CD8-positive, alpha-beta memory T cell (primary cell): ENCODE measurements at regions of chr1 and their contacts with region 1.

Region 1: GRCh38 chr1:52636721-52637695 is 4.0 kb downstream of the SHISAL2A start:
- DNase-seq: peak; percentile 57 to 90 (median 87)
- H3K4me3 ChIP-seq: peak overlapping the region; percentile 13
- H3K4me3 Mint-ChIP-seq: peak overlapping the region; percentile 78 to 91 (median 84)
- H3K27ac ChIP-seq: peak overlapping the region; percentile 81
- H3K27ac Mint-ChIP-seq: peak overlapping the region; percentile 98 to 100 (median 100)
- H3K4me1 ChIP-seq: peaks cover 89% of the 10 kb centered on the region
- H3K4me1 Mint-ChIP-seq: peaks cover 78 to 84% (median 81%) of the 10 kb centered on the region in 3 donors
- H3K27me3 ChIP-seq: no peaks in the 10 kb centered on the region
- H3K27me3 Mint-ChIP-seq: no peaks in the 10 kb centered on the region

Region 2: GRCh38 chr1:52552505-52553361 is 84.3 kb before region 1 on chr1 and contains the start of gene TUT4:
- CTCF ChIA-PET with region 1: interaction called, 3 read pairs
- POLR2A ChIA-PET with region 1: interaction called, 18 read pairs
- DNase-seq: peak in 4 of 5 donors; percentile 64 to 83 (median 65)
- H3K4me3 ChIP-seq: peak within 1 kb of the TSS; percentile 91
- H3K4me3 Mint-ChIP-seq: peak within 1 kb of the TSS in 5 of 7 donors; percentile 70 to 78 (median 75)
- H3K27ac ChIP-seq: peak within 1 kb of the TSS; percentile 79
- H3K27ac Mint-ChIP-seq: peak within 1 kb of the TSS in 7 of 8 donors; percentile 30 to 86 (median 81)
- H3K4me1 ChIP-seq: peaks cover 37% of the 10 kb centered on the region
- H3K4me1 Mint-ChIP-seq: peaks cover 30 to 45% (median 42%) of the 10 kb centered on the region in 3 donors
- H3K27me3 ChIP-seq: no peaks in the 10 kb centered on the region
- H3K27me3 Mint-ChIP-seq: no peaks in the 10 kb centered on the region
- total RNA-seq, gene TUT4: 54.1 to 63.1 TPM

Region 3: GRCh38 chr1:52582116-52582696 is 54.8 kb before region 1 on chr1:
- CTCF ChIA-PET with region 1: no interaction called
- POLR2A ChIA-PET with region 1: interaction called, 10 read pairs
- DNase-seq: no peak
- H3K4me3 ChIP-seq: no peak overlapping the region
- H3K4me3 Mint-ChIP-seq: no peak overlapping the region
- H3K27ac ChIP-seq: no peak overlapping the region
- H3K27ac Mint-ChIP-seq: peak overlapping the region in 1 of 8 donors; percentile 8
- H3K4me1 ChIP-seq: no peaks in the 10 kb centered on the region
- H3K4me1 Mint-ChIP-seq: peaks cover 5 to 10% (median 9%) of the 10 kb centered on the region in 3 donors
- H3K27me3 ChIP-seq: no peaks in the 10 kb centered on the region
- H3K27me3 Mint-ChIP-seq: no peaks in the 10 kb centered on the region

Region 4: GRCh38 chr1:52686830-52687229 is 49.8 kb after region 1 on chr1:
- CTCF ChIA-PET with region 1: interaction called, 14 read pairs
- POLR2A ChIA-PET with region 1: no interaction called
- DNase-seq: no peak
- H3K4me3 ChIP-seq: no peak overlapping the region
- H3K4me3 Mint-ChIP-seq: no peak overlapping the region
- H3K27ac ChIP-seq: no peak overlapping the region
- H3K27ac Mint-ChIP-seq: peak overlapping the region in 2 of 8 donors; percentile 49 to 76
- H3K4me1 ChIP-seq: peaks cover 8% of the 10 kb centered on the region
- H3K4me1 Mint-ChIP-seq: peaks cover 7 to 15% (median 11%) of the 10 kb centered on the region in 3 donors
- H3K27me3 ChIP-seq: no peaks in the 10 kb centered on the region
- H3K27me3 Mint-ChIP-seq: no peaks in the 10 kb centered on the region